Common myeloid progenitor, CD34-positive (primary cell): ENCODE measurements at regions of chr1 and their contacts with region 1.

Region 1: DNA sequence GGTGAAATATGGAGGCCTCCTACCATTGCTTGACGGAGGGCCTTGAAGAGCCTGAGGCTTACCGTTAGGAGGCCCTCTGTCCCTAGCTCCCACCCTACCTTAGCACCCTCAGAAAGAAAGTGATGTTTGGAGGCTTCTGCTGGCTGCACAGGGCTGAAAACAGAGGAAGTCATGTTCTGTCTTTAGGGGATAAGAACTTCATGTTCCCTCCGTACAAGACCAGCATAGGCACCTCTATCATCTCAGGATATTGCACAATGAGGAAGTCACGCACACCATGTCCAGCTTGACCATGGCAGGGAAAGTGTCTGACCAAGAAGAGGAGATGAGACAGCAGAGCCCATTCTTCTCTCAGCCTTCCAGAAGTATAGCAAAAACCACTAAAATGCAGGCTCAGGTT is 13.8 kb downstream of the ADORA3 start:
- DNase-seq: no peak
- H3K4me3 ChIP-seq: no peak overlapping the region
- H3K27ac ChIP-seq: no peak overlapping the region
- H3K4me1 ChIP-seq: peaks cover 0 to 26% (median 8%) of the 10 kb centered on the region in 4 experiments
- H3K27me3 ChIP-seq: no peaks in the 10 kb centered on the region

Region 2: DNA sequence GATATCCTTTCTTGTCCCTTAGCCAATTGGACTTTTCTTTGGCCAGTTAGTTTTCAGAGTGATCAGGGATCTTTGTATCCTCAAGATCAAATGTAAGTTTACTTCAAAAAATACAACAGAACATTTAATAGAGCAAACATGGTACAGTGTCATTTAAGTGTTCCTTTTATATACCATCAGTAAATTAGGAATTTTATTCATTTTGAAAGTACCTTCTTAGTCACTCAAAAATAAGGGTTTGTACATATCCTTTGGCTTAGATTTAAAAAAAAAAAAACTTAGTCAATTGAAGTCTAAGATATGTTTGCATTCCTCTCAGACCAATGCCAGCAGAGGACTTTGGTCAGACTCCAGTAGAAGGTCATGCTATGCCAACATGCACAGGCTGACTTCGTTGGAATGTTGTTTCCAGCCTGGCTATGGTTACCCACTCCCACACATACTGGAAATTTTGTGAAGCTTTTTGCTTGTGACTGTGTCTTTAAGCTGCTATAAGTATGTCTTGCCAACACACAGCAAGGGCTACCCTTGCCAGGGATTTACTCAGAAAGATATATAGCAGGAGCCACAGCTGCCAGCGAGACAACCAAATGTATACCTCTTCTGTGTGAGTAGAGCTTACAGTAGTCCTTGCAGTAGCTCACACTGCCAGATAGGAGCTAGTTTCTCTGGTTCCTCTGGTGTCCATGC is 444.4 kb before region 1 on chr1:
- CTCF ChIA-PET with region 1: no interaction called
- POLR2A ChIA-PET with region 1: interaction called, 13 read pairs
- DNase-seq: no peak
- H3K4me3 ChIP-seq: no peak overlapping the region
- H3K27ac ChIP-seq: no peak overlapping the region
- H3K4me1 ChIP-seq: no peaks in the 10 kb centered on the region
- H3K27me3 ChIP-seq: peaks cover 2 to 41% (median 8%) of the 10 kb centered on the region in 5 experiments